ENCODE measurements at regions of chr11 and their contacts with region 1.

Region 1: GRCh38 chr11:112280268-112281126 is 19.8 kb upstream of the PLET1 start:
- DNase-seq: peak; percentile 87
- ATAC-seq: peak; percentile 93
- H3K4me3 ChIP-seq: peak overlapping the region; percentile 59 to 80 (median 69)
- H3K4me3 Mint-ChIP-seq: peak overlapping the region; percentile 98
- H3K27ac ChIP-seq: peak overlapping the region in 1 of 2 donors; percentile 20
- H3K27ac Mint-ChIP-seq: peak overlapping the region; percentile 87
- H3K4me1 ChIP-seq: peaks cover 7 to 15% of the 10 kb centered on the region in 2 donors
- H3K4me1 Mint-ChIP-seq: peaks cover 18% of the 10 kb centered on the region
- H3K27me3 ChIP-seq: no peaks in the 10 kb centered on the region
- H3K27me3 Mint-ChIP-seq: no peaks in the 10 kb centered on the region
- CTCF ChIP-seq: peak; percentile 64

Region 2: DNA sequence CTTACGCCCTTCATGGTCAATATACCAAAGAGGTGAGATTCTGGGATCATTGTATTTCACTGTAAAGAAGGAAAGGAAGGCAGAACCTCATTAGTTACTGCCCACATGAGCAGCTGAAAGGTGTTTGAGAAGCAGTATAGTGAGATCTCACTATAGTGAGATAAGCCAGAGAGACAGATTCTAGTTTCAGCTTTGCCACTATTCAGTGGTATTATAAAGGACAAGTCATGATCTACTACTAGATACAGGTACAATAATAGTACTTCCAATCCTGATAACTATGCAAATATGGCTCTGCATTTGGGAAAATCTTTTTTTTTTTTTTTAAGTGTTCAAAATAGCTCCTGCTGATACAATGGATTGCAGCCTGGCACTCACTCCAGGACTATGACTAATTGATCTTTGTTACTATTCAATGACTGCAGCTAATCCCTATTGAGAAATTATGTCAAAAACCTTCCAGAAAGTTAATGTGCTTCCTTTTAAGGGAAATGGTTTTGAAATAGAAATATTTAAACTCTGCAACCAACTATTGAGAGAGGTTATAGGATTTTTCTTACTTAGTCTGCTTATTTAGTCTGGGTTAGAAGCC is 263.6 kb before region 1 on chr11:
- CTCF ChIA-PET with region 1: no interaction called
- POLR2A ChIA-PET with region 1: no interaction called
- intact Hi-C with region 1: no loop called
- DNase-seq: no peak
- ATAC-seq: no peak
- H3K4me3 ChIP-seq: no peak overlapping the region
- H3K4me3 Mint-ChIP-seq: peak overlapping the region; percentile 79
- H3K27ac ChIP-seq: no peak overlapping the region
- H3K27ac Mint-ChIP-seq: no peak overlapping the region
- H3K4me1 ChIP-seq: peaks cover 0 to 9% of the 10 kb centered on the region in 2 donors
- H3K4me1 Mint-ChIP-seq: peaks cover 7% of the 10 kb centered on the region
- H3K27me3 ChIP-seq: no peaks in the 10 kb centered on the region
- H3K27me3 Mint-ChIP-seq: peaks cover 2% of the 10 kb centered on the region
- CTCF ChIP-seq: no peak

Region 3: DNA sequence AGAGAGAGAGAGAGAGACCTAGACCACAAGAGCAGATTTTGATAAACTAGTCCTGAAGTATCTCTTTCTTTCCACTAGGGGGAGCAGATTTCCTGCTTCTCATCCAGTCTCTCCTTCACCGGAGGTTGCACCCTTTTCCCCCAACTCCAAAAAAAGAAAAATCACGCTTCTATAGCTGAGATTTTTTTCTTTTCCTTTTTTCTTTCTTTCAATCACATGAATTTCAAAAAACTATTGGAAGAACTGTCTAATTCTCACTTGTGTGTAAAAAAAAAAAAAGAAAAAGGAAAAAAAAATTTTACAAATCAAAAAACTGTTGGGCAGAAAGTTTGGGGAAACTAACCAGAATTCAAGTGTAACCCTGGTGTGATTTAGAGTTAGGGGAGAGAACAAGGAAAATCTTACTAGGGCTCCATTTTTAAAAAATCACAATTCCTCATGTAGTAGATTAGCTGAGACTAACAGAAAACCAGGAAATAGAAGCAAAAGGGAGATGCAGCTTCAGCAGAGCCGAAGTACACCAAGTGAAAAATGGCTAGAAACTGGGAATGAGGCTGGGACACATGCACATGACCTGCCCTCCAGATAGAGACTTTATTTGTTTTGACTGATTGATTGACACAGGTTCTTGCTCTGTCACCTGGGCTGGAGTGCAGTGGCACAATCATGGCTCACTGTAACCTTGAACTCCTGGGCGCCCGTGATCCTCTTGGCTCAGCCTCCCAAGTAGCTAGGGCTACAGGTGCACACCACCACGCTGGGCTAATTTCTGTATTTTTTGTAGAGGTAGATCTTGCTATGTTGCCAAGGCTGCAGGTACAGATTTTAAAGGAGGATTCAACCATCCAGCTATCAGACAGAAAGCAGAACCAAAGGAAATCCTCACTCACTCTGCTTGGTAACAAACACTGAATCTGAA is 166.7 kb before region 1 on chr11:
- CTCF ChIA-PET with region 1: interaction called, 55 read pairs
- POLR2A ChIA-PET with region 1: interaction called, 6 read pairs
- intact Hi-C with region 1: no loop called
- DNase-seq: peak; percentile 53
- ATAC-seq: peak; percentile 68
- H3K4me3 ChIP-seq: no peak overlapping the region
- H3K4me3 Mint-ChIP-seq: no peak overlapping the region
- H3K27ac ChIP-seq: no peak overlapping the region
- H3K27ac Mint-ChIP-seq: no peak overlapping the region
- H3K4me1 ChIP-seq: no peaks in the 10 kb centered on the region
- H3K4me1 Mint-ChIP-seq: no peaks in the 10 kb centered on the region
- H3K27me3 ChIP-seq: no peaks in the 10 kb centered on the region
- H3K27me3 Mint-ChIP-seq: no peaks in the 10 kb centered on the region
- CTCF ChIP-seq: peak; percentile 83

Region 4: DNA sequence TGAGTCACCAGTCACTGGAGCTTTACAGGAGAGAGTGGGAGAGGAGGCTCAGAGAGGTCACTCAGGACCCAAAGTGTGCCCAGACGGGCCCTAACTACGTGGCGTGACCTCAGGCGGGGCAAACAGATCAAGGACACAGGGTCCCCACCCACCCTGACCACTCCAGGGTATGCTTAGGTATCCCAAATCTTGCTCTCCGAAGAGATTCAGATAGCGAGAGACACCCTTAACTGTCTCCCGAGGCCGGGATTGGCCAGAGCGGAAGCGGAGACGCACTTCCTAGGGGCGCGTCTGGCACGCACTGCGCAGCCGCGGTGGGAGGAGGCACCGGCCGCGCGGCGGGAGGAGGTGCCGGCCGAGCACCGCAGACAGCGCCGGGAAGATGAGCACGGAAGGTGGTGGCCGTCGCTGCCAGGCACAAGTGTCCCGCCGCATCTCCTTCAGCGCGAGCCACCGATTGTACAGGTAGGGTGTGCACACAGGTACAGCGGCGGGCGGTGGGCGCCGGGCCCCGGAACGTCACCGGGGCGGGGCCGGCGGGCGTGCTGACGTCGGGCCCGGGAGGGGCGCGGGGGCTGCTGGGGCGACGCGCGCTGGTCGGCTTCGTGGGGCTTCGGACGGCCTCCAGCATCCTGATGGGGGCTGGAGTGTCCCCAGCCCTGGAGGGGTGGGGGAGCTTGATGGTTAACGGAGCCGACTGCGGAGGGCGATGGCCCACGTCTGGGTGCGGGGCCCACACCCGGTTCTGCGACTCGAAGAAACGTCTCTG is 54.3 kb before region 1 on chr11 and contains the start of gene PTS:
- CTCF ChIA-PET with region 1: interaction called, 471 read pairs
- POLR2A ChIA-PET with region 1: interaction called, 5 read pairs
- intact Hi-C with region 1: loop called (anchors 1 kb)
- DNase-seq: peak; percentile 94
- ATAC-seq: peak; percentile 90
- H3K4me3 ChIP-seq: peak within 1 kb of the TSS; percentile 82 to 98 (median 92)
- H3K4me3 Mint-ChIP-seq: peak within 1 kb of the TSS; percentile 95
- H3K27ac ChIP-seq: peak within 1 kb of the TSS; percentile 99
- H3K27ac Mint-ChIP-seq: peak within 1 kb of the TSS; percentile 99
- H3K4me1 ChIP-seq: peaks cover 10 to 18% of the 10 kb centered on the region in 2 donors
- H3K4me1 Mint-ChIP-seq: peaks cover 23% of the 10 kb centered on the region
- H3K27me3 ChIP-seq: no peaks in the 10 kb centered on the region
- H3K27me3 Mint-ChIP-seq: no peaks in the 10 kb centered on the region
- CTCF ChIP-seq: no peak
- total RNA-seq, gene PTS: 36.2 and 36.7 TPM in 2 replicates

Region 5: DNA sequence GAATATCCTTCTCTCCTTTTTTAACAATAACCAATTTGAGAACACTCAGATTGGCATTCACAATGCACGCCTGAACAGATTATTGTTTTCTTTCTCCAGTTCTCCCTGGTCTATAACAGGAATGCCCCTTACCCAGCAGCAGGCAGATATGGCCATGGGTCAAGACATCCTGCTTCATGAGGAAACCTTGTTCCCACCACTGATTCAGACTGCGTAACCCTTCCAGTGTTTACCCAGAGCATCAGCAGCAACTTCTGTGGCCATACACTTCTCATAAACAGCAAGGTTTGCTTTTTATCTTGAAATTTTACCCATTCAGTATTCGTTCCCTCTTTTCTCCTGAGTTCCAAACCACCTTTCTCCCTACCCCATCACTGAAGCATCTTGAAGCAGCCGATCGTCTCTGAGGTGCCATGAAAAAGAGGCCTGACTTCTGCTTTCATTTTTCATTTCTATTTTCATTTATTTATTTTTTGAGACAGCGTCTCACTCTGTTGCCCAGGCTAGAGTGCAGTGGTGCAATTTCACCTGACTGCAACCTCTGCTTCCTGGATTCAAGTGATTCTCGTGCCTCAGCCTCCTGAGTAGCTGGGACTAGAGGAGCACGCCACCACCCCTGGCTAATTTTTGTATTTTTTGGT is 44.6 kb before region 1 on chr11:
- CTCF ChIA-PET with region 1: interaction called, 471 read pairs
- POLR2A ChIA-PET with region 1: no interaction called
- intact Hi-C with region 1: no loop called
- DNase-seq: peak; percentile 49
- ATAC-seq: peak; percentile 73
- H3K4me3 ChIP-seq: peak overlapping the region in 4 of 5 experiments; percentile 7 to 41 (median 34)
- H3K4me3 Mint-ChIP-seq: peak overlapping the region; percentile 88
- H3K27ac ChIP-seq: peak overlapping the region; percentile 84 to 85
- H3K27ac Mint-ChIP-seq: peak overlapping the region; percentile 97
- H3K4me1 ChIP-seq: peaks cover 16 to 20% of the 10 kb centered on the region in 2 donors
- H3K4me1 Mint-ChIP-seq: peaks cover 18% of the 10 kb centered on the region
- H3K27me3 ChIP-seq: no peaks in the 10 kb centered on the region
- H3K27me3 Mint-ChIP-seq: no peaks in the 10 kb centered on the region
- CTCF ChIP-seq: no peak

Region 6: DNA sequence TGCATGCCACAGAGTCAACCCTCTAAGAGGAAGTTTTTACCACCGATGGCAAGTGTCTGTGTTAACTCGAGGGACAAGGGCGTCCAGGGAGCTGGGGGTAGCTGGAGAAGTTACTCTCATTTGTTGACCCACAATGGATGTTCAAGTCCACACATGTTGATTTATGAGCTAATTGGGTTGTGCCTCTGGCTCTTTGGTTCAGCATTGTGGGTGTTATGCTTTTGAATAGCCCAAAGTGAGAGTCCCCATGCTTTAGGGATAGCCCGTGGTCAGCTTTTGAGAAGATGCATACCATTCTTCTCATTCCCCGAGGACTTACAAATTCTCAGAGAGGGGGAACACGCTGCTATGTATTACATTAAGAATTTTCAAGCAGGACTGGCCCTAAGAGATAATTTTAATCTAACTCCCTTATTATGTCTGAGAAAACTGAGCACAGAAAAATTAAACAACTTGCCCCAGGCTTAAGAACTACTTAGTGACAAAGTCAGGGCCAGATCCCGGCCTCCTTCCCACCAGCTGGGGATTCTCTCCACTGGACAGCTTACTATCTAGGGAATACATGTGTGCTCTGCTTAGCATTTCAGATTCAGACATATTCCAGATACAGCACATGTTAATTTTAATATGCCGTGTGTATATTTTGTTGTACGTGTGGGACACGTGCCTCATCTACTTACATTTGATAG is 14.6 kb before region 1 on chr11:
- CTCF ChIA-PET with region 1: interaction called, 26 read pairs
- POLR2A ChIA-PET with region 1: no interaction called
- intact Hi-C with region 1: no loop called
- DNase-seq: no peak
- ATAC-seq: no peak
- H3K4me3 ChIP-seq: no peak overlapping the region
- H3K4me3 Mint-ChIP-seq: no peak overlapping the region
- H3K27ac ChIP-seq: no peak overlapping the region
- H3K27ac Mint-ChIP-seq: no peak overlapping the region
- H3K4me1 ChIP-seq: peaks cover under 1 to 4% of the 10 kb centered on the region in 2 donors
- H3K4me1 Mint-ChIP-seq: peaks cover 5% of the 10 kb centered on the region
- H3K27me3 ChIP-seq: no peaks in the 10 kb centered on the region
- H3K27me3 Mint-ChIP-seq: no peaks in the 10 kb centered on the region
- CTCF ChIP-seq: no peak

Measured in B cell (primary cell).